GM12878 (cell line): ENCODE measurements at regions of chr2 and their contacts with region 1.

Region 1: DNA sequence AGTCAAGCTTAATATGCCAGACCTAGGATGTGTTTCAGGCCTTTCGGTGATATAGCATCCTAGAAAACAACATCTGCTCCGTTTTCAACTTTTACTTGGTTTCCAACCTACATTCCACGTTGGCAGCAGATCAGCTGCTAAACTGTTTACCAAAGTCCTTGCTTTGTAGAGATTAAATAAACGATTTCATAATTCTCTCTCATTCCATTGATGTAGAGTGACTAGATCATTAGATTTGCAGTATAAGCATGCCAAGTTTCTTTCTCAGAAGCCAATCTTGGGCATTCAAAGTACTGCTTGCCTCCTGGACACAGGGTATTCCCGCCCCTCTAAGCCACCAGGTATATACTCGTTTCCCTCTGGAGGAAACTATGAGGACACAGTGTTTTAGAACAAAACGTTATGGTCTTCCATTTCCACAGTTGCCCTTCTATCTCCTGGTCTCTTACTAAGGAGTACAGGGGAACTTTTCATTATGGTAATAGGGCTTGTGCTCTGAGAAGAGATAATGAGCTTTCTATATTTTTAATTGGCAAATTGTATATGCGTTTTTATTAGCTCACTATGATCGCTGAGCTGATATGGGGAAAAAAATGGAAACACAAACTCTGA is 10.5 kb upstream of the INSIG2 start:
- DNase-seq: no peak
- ATAC-seq: no peak
- H3K4me3 ChIP-seq: no peak overlapping the region
- H3K27ac ChIP-seq: no peak overlapping the region
- H3K4me1 ChIP-seq: no peaks in the 10 kb centered on the region
- H3K27me3 ChIP-seq: peaks cover 0 to 15% of the 10 kb centered on the region in 2 experiments; a peak in 2 of 4 replicates
- CTCF ChIP-seq: no peak
- EP300 ChIP-seq: no peak
- POLR2A ChIP-seq: no peak
- RAD21 ChIP-seq: no peak

Region 2: DNA sequence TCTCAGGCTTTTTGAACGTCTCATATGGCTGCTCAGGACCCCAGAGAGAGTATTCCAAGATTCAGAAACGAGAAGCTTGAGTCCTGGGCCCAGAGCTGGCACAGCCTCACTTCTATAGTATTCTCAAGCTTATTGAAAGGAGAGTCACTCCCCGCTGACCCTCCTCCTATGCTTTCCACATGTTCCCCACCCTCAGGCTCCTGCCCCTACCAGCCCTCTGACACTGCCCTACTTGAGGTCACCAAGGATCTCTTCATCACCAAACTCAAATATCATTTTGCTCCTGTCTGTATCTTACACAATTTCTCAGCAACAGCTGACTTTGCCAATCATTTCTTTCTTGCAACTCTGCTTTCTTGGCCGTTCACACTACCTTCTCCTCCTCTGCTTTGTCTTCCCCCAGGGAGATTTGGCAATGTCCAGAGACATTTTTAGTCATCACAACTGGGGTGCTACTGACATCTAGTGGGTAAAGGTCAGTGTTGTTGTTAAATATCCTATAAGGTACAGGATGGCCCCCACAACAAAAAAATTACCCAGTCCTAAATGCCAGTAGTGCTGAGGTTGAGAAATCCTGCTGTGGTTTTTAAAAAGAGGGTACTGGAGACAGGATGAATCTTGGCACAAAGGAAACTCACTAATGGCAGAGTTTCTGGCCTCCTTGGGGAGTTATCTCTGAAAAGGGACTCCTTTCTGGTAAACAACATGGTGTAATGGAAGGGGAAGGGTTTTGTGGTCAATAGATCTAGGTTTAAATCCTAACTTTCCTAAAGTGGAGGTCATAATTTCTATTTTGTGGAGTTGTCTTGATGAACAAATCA is 16.4 kb before region 1 on chr2:
- CTCF ChIA-PET with region 1: interaction called, 31 read pairs
- POLR2A ChIA-PET with region 1: no interaction called
- RAD21 ChIA-PET with region 1: interaction called, 4 read pairs
- SMC1A ChIA-PET with region 1: interaction called, 16 read pairs
- in situ Hi-C with region 1: no loop called
- intact Hi-C with region 1: no loop called
- DNase-seq: peak; percentile 57
- ATAC-seq: peak; percentile 87
- H3K4me3 ChIP-seq: no peak overlapping the region
- H3K27ac ChIP-seq: no peak overlapping the region
- H3K4me1 ChIP-seq: peaks cover 27% of the 10 kb centered on the region
- H3K27me3 ChIP-seq: no peaks in the 10 kb centered on the region
- CTCF ChIP-seq: peak; percentile 67 to 76 (median 68)
- EP300 ChIP-seq: no peak
- POLR2A ChIP-seq: no peak
- RAD21 ChIP-seq: peak; percentile 98